OCI-LY7 (cell line): ENCODE measurements at regions of chr2 and their contacts with region 1.

Region 1: DNA sequence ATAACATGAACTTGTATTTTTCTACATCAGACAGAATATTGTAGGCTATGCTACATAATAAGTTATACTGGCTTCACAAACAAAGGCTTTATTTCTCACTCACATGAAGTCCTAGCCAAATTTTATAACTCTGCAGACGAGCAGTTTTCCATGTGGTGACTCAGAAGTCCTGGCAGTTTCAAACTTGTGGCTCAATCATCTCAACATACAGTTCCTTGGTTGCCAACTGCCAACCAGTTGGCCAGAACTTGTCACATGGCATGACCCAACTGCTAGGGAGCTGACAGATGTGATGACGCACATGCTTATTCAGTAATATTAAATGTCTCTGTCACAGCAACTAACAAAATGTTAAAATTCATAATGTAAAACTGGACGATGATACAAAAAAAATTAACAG is 63.8 kb upstream of the ZC3H15 start:
- DNase-seq: no peak
- H3K4me3 ChIP-seq: no peak overlapping the region
- H3K27ac ChIP-seq: no peak overlapping the region
- H3K4me1 ChIP-seq: peaks cover 7% of the 10 kb centered on the region
- CTCF ChIP-seq: no peak

Region 2: GRCh38 chr2:186407611-186408010 is 14.6 kb before region 1 on chr2:
- CTCF ChIA-PET with region 1: no interaction called
- POLR2A ChIA-PET with region 1: interaction called, 12 read pairs
- intact Hi-C with region 1: no loop called
- DNase-seq: no peak
- H3K4me3 ChIP-seq: no peak overlapping the region
- H3K27ac ChIP-seq: no peak overlapping the region
- H3K4me1 ChIP-seq: no peaks in the 10 kb centered on the region
- CTCF ChIP-seq: no peak